ENCODE measurements at regions of chr20 and their contacts with region 1.

Region 1: DNA sequence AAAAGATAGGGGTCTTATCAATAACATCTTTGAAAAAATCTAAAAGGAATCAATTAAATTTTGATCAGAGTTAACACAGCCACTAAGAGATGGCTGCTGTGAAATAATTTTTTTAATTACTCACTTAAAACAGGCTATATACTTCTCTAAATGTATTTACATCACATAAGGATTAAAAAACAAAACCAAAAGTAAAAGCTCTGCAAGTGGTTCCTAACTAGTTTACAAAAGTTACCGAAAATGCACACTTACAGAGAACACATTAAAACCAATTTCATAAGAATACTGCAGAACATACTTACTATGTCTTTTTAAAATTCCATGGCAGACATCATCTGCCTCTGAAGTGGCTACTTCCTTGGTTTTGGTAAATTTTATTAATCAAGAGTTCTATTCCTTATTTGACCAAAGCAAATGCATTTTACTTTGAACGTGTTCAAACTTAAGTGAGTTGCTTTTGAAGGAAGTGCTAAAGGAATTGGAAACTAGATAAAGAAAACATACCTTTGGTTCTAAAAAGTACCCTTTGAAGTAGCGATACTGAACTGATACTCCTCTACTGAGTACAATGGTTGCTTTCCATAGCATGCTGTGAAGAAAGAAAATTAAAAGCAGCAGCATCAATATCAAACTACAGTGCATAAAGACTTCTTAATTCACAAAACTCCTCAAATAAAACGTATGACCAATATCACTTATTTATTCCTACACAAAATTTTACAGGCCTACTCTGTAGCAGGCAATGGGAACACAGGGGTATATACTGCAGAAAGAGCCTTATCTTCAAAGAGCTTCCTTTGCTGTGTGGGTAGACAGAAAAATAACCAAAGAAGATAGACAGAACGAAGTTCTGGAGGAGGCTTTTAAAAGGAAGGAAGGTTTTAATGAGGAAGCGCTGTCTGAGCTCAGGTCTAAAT is 157.1 kb upstream of the SHLD1 start:
- DNase-seq: peak in 1 of 9 experiments; percentile 29
- ATAC-seq: peak; percentile 66
- H3K4me3 ChIP-seq: peak overlapping the region; percentile 21 to 26
- H3K4me3 Mint-ChIP-seq: peak overlapping the region; percentile 82
- H3K27ac ChIP-seq: peak overlapping the region; percentile 40 to 60
- H3K27ac Mint-ChIP-seq: peak overlapping the region; percentile 94
- H3K4me1 ChIP-seq: peaks cover 27% of the 10 kb centered on the region
- H3K4me1 Mint-ChIP-seq: peaks cover 68% of the 10 kb centered on the region
- H3K27me3 ChIP-seq: no peaks in the 10 kb centered on the region
- H3K27me3 Mint-ChIP-seq: no peaks in the 10 kb centered on the region
- CTCF ChIP-seq: no peak

Region 2: DNA sequence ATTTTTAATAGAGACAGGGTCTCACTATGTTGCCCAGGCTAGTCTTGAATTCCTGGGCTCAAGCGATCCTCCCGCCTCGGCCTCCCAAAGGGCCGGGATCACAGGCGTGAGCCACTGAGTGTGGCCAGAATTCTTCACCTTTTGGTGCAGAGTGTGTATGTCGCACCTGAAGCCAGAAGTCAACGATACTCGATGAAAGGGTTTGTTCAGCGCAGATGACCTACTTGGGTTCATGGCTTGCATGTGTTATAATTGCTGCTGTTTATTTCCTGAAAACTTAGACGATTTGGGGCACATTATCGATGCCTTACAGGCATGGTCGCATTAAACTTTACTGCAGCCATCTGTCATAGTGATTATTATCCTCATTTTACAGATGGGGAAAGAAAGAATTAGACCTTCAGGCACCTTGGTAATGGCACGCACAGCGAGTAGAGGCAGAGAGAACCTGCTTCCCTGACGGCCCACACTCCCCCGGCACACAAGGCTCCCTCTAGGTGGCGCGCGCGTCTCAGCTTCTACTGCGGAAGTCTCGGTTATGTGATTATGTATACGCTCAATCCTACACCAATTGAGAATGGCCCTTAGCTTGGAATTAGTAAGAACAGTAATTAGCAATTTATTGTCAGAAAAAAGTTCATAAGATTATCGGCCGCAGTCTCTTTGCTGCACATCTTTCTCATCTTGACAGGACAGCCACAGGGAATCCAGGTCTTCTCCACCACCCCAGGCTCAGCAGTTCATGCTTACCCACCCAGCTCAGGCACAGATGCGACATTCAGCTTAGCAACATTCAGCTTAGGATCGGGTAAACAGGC is 63.5 kb before region 1 on chr20:
- CTCF ChIA-PET with region 1: no interaction called
- POLR2A ChIA-PET with region 1: no interaction called
- intact Hi-C with region 1: no loop called
- DNase-seq: peak; percentile 68 to 87 (median 83)
- ATAC-seq: peak; percentile 92
- H3K4me3 ChIP-seq: peak overlapping the region in 1 of 2 experiments; percentile 13
- H3K4me3 Mint-ChIP-seq: peak overlapping the region; percentile 76
- H3K27ac ChIP-seq: no peak overlapping the region
- H3K27ac Mint-ChIP-seq: peak overlapping the region; percentile 74
- H3K4me1 ChIP-seq: peaks cover 4% of the 10 kb centered on the region
- H3K4me1 Mint-ChIP-seq: peaks cover 11% of the 10 kb centered on the region
- H3K27me3 ChIP-seq: no peaks in the 10 kb centered on the region
- H3K27me3 Mint-ChIP-seq: no peaks in the 10 kb centered on the region
- CTCF ChIP-seq: peak; percentile 48

Region 3: DNA sequence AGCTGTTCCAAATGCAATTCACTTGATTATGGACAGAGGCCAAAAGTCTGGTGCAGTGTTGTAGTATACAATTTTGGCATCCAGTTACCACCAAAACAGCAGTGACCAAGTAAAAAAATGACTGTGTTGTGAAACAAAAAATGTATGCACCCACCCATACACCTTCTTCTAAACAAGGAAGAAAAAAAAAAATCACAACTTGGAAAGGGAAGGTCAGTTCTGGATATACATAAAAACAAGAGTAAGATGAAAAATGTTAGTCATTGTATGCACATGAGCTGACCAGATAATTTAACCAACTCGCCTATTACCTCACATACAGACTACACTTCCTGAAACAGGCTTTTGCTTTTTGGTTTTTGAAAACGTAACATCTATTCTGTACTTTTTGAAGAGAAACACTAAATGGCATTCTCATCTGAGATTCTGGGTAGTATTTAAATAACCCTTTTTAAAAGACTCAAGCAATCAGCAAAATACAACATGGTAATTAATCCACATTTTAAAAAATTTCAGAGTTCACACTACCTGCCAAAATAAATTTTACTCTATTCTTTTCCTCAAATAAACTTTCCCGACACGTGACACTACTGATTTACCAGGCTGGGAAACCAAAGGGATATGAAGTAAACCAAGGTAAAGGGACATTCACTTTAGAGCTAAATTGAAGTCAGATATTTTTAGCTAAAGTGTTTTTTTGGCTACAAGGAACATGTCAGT is 15.5 kb after region 1 on chr20:
- CTCF ChIA-PET with region 1: interaction called, 3 read pairs
- POLR2A ChIA-PET with region 1: interaction called, 10 read pairs
- intact Hi-C with region 1: no loop called
- DNase-seq: peak in 2 of 9 experiments; percentile 27 to 52
- ATAC-seq: no peak
- H3K4me3 ChIP-seq: peak overlapping the region; percentile 59 to 97
- H3K4me3 Mint-ChIP-seq: peak overlapping the region; percentile 98
- H3K27ac ChIP-seq: peak overlapping the region; percentile 94 to 96
- H3K27ac Mint-ChIP-seq: peak overlapping the region; percentile 99
- H3K4me1 ChIP-seq: peaks cover 42% of the 10 kb centered on the region
- H3K4me1 Mint-ChIP-seq: peaks cover 55% of the 10 kb centered on the region
- H3K27me3 ChIP-seq: no peaks in the 10 kb centered on the region
- H3K27me3 Mint-ChIP-seq: no peaks in the 10 kb centered on the region
- CTCF ChIP-seq: no peak